ENCODE measurements at regions of chr10 and their contacts with region 1.

Region 1: DNA sequence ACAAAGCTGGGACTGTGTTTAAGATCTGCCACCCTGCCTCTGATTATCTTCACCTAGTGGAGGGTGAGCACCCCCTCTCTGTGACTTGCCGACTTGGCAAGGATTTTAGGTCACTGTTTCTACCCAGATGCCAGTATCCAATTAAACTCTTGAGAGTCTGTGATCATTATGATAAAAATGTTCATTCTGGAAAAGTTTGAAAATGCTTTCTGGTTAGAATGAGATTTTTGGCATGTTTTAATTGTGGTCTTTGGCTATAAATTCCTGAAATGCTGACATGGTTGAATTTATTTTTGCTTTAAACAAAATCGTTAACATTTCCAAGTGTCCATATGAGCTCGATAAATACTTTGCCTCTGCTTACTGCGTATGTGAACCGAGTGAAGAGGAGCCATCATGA is 221.4 kb downstream of the BICC1 start:
- DNase-seq: no peak
- H3K4me3 Mint-ChIP-seq: no peak overlapping the region
- H3K27ac Mint-ChIP-seq: no peak overlapping the region
- H3K4me1 Mint-ChIP-seq: no peaks in the 10 kb centered on the region
- H3K27me3 Mint-ChIP-seq: no peaks in the 10 kb centered on the region

Region 2: GRCh38 chr10:58618158-58618676 is 115.9 kb before region 1 on chr10:
- CTCF ChIA-PET with region 1: no interaction called
- intact Hi-C with region 1: loop called (anchors 5 kb)
- DNase-seq: no peak
- H3K4me3 Mint-ChIP-seq: no peak overlapping the region
- H3K27ac Mint-ChIP-seq: no peak overlapping the region
- H3K4me1 Mint-ChIP-seq: no peaks in the 10 kb centered on the region
- H3K27me3 Mint-ChIP-seq: no peaks in the 10 kb centered on the region

Region 3: GRCh38 chr10:58723966-58724365 is 10.2 kb before region 1 on chr10:
- CTCF ChIA-PET with region 1: no interaction called
- intact Hi-C with region 1: no loop called
- DNase-seq: no peak
- H3K4me3 Mint-ChIP-seq: no peak overlapping the region
- H3K27ac Mint-ChIP-seq: no peak overlapping the region
- H3K4me1 Mint-ChIP-seq: no peaks in the 10 kb centered on the region
- H3K27me3 Mint-ChIP-seq: no peaks in the 10 kb centered on the region

Measured in activated naive CD4-positive, alpha-beta T cell treated with anti-CD3 and anti-CD28 coated beads for 36 hours (primary cell).